H1 (cell line): ENCODE measurements at regions of chr15 and their contacts with region 1.

Region 1: GRCh38 chr15:55649054-55649423 is 60.9 kb upstream of the PYGO1 start:
- DNase-seq: no peak
- H3K4me3 ChIP-seq: no peak overlapping the region
- H3K27ac ChIP-seq: no peak overlapping the region
- H3K4me1 ChIP-seq: peaks cover 2 to 6% (median 5%) of the 10 kb centered on the region in 4 experiments; a peak in 5 of 7 replicates
- H3K27me3 ChIP-seq: no peaks in the 10 kb centered on the region
- CTCF ChIP-seq: no peak
- EP300 ChIP-seq: no peak
- POLR2A ChIP-seq: no peak
- RAD21 ChIP-seq: no peak

Region 2: DNA sequence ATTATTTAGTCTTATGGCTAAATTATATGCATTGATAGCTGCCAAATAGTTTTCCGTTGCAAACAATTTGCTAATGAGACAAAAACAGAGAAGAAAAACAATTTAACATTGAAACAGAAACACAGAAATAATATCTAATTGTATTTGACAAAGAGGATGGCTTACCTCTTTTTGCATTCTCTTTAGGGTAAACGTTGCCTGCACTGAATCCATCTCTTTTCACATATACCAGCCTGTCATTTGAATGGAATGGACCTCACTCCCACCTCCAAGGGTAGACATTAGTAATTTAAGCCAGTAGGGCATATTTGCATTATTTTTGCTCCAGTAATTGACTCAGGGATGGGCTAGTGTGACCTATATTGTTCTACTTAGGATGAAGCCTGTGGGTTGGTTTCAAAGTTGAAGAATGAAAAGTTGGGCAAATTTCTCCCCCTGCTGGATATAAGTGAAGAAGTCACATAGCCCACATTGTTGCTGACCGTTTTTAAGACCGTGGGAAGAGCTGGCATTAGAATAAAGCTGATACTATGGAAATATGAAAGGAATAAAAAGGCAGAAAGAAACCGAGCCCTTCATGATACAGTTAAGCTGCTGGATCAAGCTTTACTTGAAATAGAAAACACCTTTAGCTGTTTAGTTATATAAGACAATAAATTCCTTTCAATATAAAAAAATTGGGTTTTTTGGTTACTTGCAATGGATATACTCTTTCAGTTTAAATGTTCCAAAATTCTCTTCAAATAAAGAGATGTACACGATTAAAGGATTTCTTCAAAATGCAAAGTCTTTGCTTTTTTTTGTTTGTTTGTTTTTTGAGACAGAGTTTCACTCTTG is 213.8 kb before region 1 on chr15:
- CTCF ChIA-PET with region 1: no interaction called
- POLR2A ChIA-PET with region 1: no interaction called
- DNase-seq: peak; percentile 7 to 35
- H3K4me3 ChIP-seq: no peak overlapping the region
- H3K27ac ChIP-seq: no peak overlapping the region
- H3K4me1 ChIP-seq: no peaks in the 10 kb centered on the region
- H3K27me3 ChIP-seq: no peaks in the 10 kb centered on the region
- CTCF ChIP-seq: peak in 2 of 3 experiments; percentile 63 to 64; a peak in 3 of 4 replicates
- EP300 ChIP-seq: no peak
- POLR2A ChIP-seq: no peak
- RAD21 ChIP-seq: peak; percentile 74 to 75

Region 3: GRCh38 chr15:55660153-55660552 is 11.1 kb after region 1 on chr15:
- CTCF ChIA-PET with region 1: interaction called, 18 read pairs
- POLR2A ChIA-PET with region 1: interaction called, 4 read pairs
- DNase-seq: no peak
- H3K4me3 ChIP-seq: no peak overlapping the region; a peak in 1 of 8 replicates
- H3K27ac ChIP-seq: no peak overlapping the region
- H3K4me1 ChIP-seq: peaks cover 0 to 10% (median 2%) of the 10 kb centered on the region in 4 experiments; a peak in 2 of 7 replicates
- H3K27me3 ChIP-seq: no peaks in the 10 kb centered on the region
- CTCF ChIP-seq: no peak
- EP300 ChIP-seq: no peak
- POLR2A ChIP-seq: no peak
- RAD21 ChIP-seq: no peak

Region 4: DNA sequence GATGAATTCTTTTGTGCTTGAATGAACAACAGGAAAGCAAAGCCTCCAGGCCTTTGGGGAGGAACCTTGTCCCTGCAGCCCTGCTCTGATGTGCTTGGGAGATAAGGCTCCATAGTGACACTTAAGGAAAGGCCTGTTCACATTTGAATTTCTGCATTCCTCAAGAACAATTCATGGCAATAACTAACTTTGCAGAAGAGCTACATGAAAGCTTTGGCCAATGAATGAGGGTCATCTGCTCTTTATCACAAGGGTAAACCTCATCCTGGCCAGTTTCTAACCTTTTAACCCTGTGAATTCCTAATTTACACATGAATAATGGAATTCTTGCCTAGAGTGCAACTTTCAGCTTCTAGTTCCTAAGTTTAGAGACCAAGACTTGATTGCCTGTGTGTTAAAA is 88.3 kb after region 1 on chr15:
- CTCF ChIA-PET with region 1: interaction called, 10 read pairs
- POLR2A ChIA-PET with region 1: no interaction called
- DNase-seq: no peak
- H3K4me3 ChIP-seq: no peak overlapping the region
- H3K27ac ChIP-seq: no peak overlapping the region
- H3K4me1 ChIP-seq: peaks cover 0 to 5% (median 2%) of the 10 kb centered on the region in 4 experiments; a peak in 4 of 7 replicates
- H3K27me3 ChIP-seq: peaks cover 60 to 91% (median 82%) of the 10 kb centered on the region in 4 experiments
- CTCF ChIP-seq: no peak
- EP300 ChIP-seq: no peak
- POLR2A ChIP-seq: no peak
- RAD21 ChIP-seq: no peak

Region 5: DNA sequence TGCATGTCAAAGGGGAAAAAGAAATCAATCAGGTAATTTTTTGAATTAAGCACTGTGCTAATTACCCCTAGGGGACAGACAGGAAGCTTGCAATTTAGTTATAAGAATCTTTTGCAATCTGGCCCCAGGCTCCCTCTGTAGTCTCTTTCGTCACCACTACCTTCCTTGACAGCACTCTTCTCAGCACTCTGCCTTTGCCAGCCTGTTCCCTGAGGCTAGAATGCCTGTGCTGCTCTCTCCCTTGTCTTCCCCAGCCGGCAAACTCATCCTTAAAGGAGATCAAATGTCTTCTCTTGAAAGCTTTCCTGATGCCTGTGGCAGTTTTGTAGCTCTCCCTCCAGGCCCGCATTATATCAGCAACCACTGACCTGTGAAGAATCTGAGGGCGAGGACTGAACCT is 126.3 kb after region 1 on chr15:
- CTCF ChIA-PET with region 1: interaction called, 57 read pairs
- POLR2A ChIA-PET with region 1: no interaction called
- DNase-seq: no peak
- H3K4me3 ChIP-seq: no peak overlapping the region
- H3K27ac ChIP-seq: no peak overlapping the region
- H3K4me1 ChIP-seq: peaks cover 0 to 4% (median 0%) of the 10 kb centered on the region in 4 experiments; a peak in 1 of 7 replicates
- H3K27me3 ChIP-seq: no peaks in the 10 kb centered on the region
- CTCF ChIP-seq: no peak
- EP300 ChIP-seq: no peak
- POLR2A ChIP-seq: no peak
- RAD21 ChIP-seq: 0 out of 4 replicates have a peak, but pooled peaks of 1 of the 2 experiments have one; percentile 5

Region 6: GRCh38 chr15:55799291-55800212 is 150.5 kb after region 1 on chr15:
- CTCF ChIA-PET with region 1: interaction called, 201 read pairs
- POLR2A ChIA-PET with region 1: no interaction called
- DNase-seq: peak in 1 of 2 experiments; percentile 84
- H3K4me3 ChIP-seq: no peak overlapping the region
- H3K27ac ChIP-seq: no peak overlapping the region
- H3K4me1 ChIP-seq: peaks cover 0 to 5% (median 2%) of the 10 kb centered on the region in 4 experiments; a peak in 3 of 7 replicates
- H3K27me3 ChIP-seq: no peaks in the 10 kb centered on the region; a peak in 1 of 7 replicates
- CTCF ChIP-seq: peak; percentile 79 to 90 (median 86)
- EP300 ChIP-seq: no peak
- POLR2A ChIP-seq: no peak
- RAD21 ChIP-seq: peak; percentile 94

Region 7: GRCh38 chr15:55827204-55827603 is 178.2 kb after region 1 on chr15:
- CTCF ChIA-PET with region 1: interaction called, 25 read pairs
- POLR2A ChIA-PET with region 1: no interaction called
- DNase-seq: no peak
- H3K4me3 ChIP-seq: no peak overlapping the region
- H3K27ac ChIP-seq: no peak overlapping the region
- H3K4me1 ChIP-seq: no peaks in the 10 kb centered on the region
- H3K27me3 ChIP-seq: no peaks in the 10 kb centered on the region
- CTCF ChIP-seq: peak in 1 of 3 experiments; percentile 23; a peak in 1 of 4 replicates
- EP300 ChIP-seq: no peak
- POLR2A ChIP-seq: no peak
- RAD21 ChIP-seq: no peak; a peak in 1 of 4 replicates

Region 8: DNA sequence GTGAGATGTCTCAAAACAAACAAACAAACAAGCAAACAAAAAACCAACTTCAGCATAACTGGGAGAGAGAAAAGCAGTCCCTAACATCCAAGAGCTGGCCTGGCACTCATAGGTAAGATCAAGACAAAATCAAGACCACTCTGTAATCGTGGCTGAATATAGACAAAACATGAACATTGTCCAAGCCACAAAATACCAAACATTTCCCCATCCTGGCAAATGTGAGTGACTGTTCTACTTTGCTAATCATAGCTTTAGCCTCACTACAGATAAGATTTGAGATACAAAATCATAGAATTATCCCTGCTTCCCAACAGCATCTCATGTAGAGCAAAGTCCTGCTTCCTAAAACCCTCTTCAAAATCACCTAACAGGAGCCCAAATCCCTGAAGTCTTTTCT is 210.6 kb after region 1 on chr15:
- CTCF ChIA-PET with region 1: interaction called, 10 read pairs
- POLR2A ChIA-PET with region 1: no interaction called
- DNase-seq: no peak
- H3K4me3 ChIP-seq: no peak overlapping the region
- H3K27ac ChIP-seq: no peak overlapping the region
- H3K4me1 ChIP-seq: no peaks in the 10 kb centered on the region
- H3K27me3 ChIP-seq: no peaks in the 10 kb centered on the region
- CTCF ChIP-seq: no peak
- EP300 ChIP-seq: no peak
- POLR2A ChIP-seq: no peak
- RAD21 ChIP-seq: no peak